Adrenal gland (tissue), 19 donors: ENCODE measurements at regions of chr9 and their contacts with region 1.

Region 1: GRCh38 chr9:111691672-111692329 is 30.4 kb downstream of the GNG10 start:
- DNase-seq: no peak
- H3K4me3 ChIP-seq: no peak overlapping the region
- H3K27ac ChIP-seq: no peak overlapping the region
- H3K4me1 ChIP-seq: no peaks in the 10 kb centered on the region
- H3K27me3 ChIP-seq: no peaks in the 10 kb centered on the region
- CTCF ChIP-seq: peak; percentile 6 to 55 (median 46)
- POLR2A ChIP-seq: no peak

Region 2: DNA sequence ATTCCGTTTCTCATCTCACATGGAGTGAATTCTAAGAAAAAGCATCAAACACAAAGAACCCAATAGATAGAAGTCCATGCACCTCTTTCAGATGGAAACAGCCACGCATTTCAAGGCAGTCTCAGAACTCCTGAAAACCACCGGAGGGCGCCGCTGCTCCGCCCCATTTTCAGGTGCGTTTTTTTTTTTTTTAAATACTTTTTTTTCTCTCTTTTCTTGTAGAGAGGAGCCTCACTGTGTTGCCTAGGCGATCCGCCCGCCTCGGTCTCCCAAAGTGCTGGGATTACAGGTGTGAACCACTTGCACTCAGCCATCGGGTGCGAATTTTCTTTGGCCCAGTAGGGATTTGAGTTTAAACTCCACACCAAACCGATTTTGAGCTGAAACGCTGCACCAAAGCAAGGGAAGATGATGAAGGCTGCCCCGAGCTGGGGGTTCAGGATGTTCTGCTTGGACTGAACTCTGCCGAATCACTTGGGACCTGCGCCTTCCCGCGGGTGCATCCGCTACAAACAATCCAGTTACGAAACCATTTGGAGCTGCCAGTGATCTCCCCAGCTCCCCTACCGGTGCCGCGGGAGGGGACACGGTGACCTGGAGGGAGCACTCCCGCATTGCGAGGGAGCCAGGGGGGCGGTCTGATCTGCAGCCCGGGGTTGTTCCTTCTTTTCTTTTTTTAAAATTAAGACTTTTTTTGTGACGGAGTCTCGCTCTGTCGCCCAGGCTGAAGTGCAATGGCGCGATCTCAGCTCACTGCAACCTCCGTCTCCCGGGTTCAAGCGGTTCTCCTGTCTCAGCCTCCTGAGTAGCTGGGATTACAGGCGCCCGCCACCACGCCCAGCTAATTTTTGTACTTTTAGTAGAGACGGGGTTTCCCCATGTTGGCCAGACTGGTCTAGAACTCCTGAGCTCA is 93.7 kb before region 1 on chr9:
- intact Hi-C with region 1: loop called (anchors 5 kb)
- DNase-seq: peak; percentile 67 to 84 (median 71)
- H3K4me3 ChIP-seq: peak overlapping the region; percentile 9 to 89 (median 57)
- H3K27ac ChIP-seq: peak overlapping the region; percentile 4 to 95 (median 80)
- H3K4me1 ChIP-seq: peaks cover 0 to 19% of the 10 kb centered on the region in 2 donors
- H3K27me3 ChIP-seq: no peaks in the 10 kb centered on the region
- CTCF ChIP-seq: peak; percentile 38 to 85 (median 66)
- POLR2A ChIP-seq: peak in 1 of 2 donors; percentile 25

Region 3: GRCh38 chr9:111648066-111648465 is 43.7 kb before region 1 on chr9:
- intact Hi-C with region 1: no loop called
- DNase-seq: peak in 6 of 7 donors; percentile 63 to 74 (median 68)
- H3K4me3 ChIP-seq: no peak overlapping the region
- H3K27ac ChIP-seq: peak overlapping the region; percentile 10 to 89 (median 81)
- H3K4me1 ChIP-seq: peaks cover 21% of the 10 kb centered on the region in 2 donors
- H3K27me3 ChIP-seq: no peaks in the 10 kb centered on the region
- CTCF ChIP-seq: no peak
- POLR2A ChIP-seq: no peak